T-cell (primary cell): ENCODE measurements at regions of chr12 and their contacts with region 1.

Region 1: DNA sequence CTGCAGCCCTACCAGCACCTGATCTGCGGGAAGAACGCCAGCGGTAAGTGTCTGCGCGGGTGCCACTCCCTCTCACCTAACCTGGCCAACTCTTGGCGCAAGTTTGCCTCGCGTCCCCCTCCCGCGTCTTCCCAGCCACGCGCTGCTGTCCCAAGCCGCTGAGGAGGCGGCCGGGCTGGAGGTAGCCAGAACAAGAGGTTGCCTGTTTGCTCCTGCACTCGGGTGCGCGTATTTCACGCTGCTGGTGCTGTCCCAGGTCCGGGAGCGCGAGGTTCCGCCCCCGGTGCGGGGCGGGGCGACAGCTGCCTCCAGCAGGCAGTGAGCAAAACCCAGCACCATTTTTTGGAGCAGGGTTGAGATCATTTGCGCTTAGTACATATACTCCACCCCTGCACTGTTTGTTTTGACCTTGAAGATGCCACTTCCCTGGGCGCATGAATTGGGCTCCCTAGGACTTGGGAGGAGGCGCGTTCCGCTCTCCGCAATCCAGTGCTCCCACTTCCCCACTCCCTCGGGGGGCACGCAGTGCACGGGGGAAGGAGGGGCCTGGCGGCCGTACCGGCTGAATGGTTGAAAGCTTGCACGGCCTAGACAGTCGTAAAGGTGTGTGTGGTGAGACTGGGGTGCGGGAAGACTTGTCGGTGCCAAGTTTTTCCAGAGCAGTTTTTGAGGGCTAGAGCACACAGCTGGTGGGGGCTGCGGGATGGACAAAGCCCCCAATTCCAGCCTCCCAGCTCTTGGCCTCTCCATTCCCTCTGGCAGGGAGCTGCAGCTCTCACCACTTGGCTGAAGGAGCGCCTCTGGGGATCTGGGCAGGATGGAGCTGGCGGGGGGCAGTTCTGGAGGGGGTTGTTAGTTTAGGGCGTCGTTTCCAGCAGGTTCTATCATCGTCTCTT is 226.9 kb upstream of the CRY1 start:
- DNase-seq: peak; percentile 58 to 89 (median 81)
- ATAC-seq: peak; percentile 53 to 65 (median 61)
- H3K4me3 ChIP-seq: peak overlapping the region; percentile 83 to 94
- H3K4me3 Mint-ChIP-seq: peak overlapping the region; percentile 80 to 89 (median 89)
- H3K27ac ChIP-seq: peak overlapping the region; percentile 79
- H3K27ac Mint-ChIP-seq: peak overlapping the region; percentile 96 to 97
- H3K4me1 ChIP-seq: peaks cover 14 to 48% of the 10 kb centered on the region in 2 experiments
- H3K4me1 Mint-ChIP-seq: peaks cover 33 to 57% (median 53%) of the 10 kb centered on the region in 3 donors
- H3K27me3 ChIP-seq: peaks cover 0 to 18% of the 10 kb centered on the region in 2 experiments
- H3K27me3 Mint-ChIP-seq: peaks cover 0 to 14% of the 10 kb centered on the region in 2 donors

Region 2: GRCh38 chr12:107402041-107403022 is 82.1 kb after region 1 on chr12:
- CTCF ChIA-PET with region 1: interaction called, 8 to 15 read pairs
- POLR2A ChIA-PET with region 1: no interaction called
- DNase-seq: peak; percentile 16 to 75 (median 49)
- ATAC-seq: peak; percentile 56 to 75 (median 72)
- H3K4me3 ChIP-seq: no peak overlapping the region
- H3K4me3 Mint-ChIP-seq: peak overlapping the region in 1 of 3 donors; percentile 7
- H3K27ac ChIP-seq: no peak overlapping the region
- H3K27ac Mint-ChIP-seq: no peak overlapping the region
- H3K4me1 ChIP-seq: peaks cover 18 to 20% of the 10 kb centered on the region in 2 experiments
- H3K4me1 Mint-ChIP-seq: peaks cover 20 to 37% (median 35%) of the 10 kb centered on the region in 3 donors
- H3K27me3 ChIP-seq: no peaks in the 10 kb centered on the region
- H3K27me3 Mint-ChIP-seq: no peaks in the 10 kb centered on the region